BJ (cell line): ENCODE measurements at regions of chr4 and their contacts with region 1.

Region 1: GRCh38 chr4:72326692-72327632 is 242.1 kb downstream of the ADAMTS3 start:
- DNase-seq: no peak
- H3K4me3 ChIP-seq: no peak overlapping the region
- H3K27me3 ChIP-seq: no peaks in the 10 kb centered on the region; the same call in 1 of the 2 replicates
- CTCF ChIP-seq: peak; percentile 66

Region 2: GRCh38 chr4:72302981-72303704 is 23.8 kb before region 1 on chr4:
- CTCF ChIA-PET with region 1: interaction called, 12 read pairs
- POLR2A ChIA-PET with region 1: no interaction called
- DNase-seq: no peak
- H3K4me3 ChIP-seq: no peak overlapping the region
- H3K27me3 ChIP-seq: no peaks in the 10 kb centered on the region
- CTCF ChIP-seq: peak; percentile 67

Region 3: DNA sequence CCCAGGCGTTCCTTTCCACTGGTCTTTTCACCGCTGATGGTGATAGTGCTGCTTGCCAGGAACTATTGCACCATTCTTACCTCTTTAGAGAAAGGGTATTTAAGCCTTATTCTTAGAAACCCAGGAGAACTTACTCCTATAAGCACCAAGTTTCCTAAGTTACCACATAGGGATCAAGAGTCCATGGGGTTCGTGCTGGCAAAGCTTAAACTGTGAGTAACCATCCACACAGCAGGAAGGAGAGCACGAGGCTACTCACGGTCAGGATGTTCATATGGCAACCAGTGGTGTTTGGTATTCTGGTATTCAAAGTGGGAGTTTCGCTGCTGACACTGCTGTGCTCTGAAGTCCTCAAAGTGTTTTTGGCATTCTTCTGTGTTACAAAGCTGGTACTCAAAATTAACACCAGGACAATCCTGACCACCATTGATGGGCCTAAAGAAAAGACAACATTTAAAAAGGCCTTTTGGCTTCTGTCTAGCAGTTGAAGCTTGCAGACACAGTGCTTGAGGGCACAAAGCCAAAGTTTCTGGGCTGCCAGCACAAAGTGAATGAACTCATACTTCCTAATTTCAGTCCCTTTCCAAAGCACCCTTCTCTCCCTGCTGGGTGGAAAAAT is 14.8 kb before region 1 on chr4:
- CTCF ChIA-PET with region 1: interaction called, 24 read pairs
- POLR2A ChIA-PET with region 1: no interaction called
- DNase-seq: peak; percentile 81
- H3K4me3 ChIP-seq: no peak overlapping the region
- H3K27me3 ChIP-seq: no peaks in the 10 kb centered on the region
- CTCF ChIP-seq: no peak

Region 4: DNA sequence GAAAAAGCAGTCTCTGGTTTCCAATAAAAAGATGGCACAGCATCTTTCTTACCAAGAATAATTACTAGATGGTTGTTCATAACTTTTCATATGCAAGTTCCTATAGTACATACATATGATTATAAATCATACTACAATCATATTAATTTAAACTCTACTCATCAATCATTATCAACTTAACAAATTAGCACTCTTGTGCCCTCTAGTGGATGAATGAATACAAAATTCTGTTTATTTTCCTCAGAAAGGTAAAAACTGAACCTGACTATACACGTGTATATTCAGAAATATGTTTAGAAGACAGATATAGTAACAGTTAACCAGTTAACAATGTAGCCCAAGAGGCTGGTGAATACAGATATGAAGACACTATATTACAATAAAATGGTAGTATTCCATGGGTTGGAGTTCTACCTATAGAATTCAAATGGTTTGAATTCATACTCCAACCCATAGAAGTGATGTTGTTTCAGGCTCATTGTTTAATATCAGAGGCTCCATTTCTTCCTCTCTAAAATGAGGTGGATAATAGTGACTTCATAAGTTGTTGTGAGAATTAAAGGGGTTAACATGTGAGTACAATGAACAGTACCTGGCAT is 142.0 kb after region 1 on chr4:
- CTCF ChIA-PET with region 1: interaction called, 65 read pairs
- POLR2A ChIA-PET with region 1: no interaction called
- DNase-seq: no peak
- H3K4me3 ChIP-seq: no peak overlapping the region
- H3K27me3 ChIP-seq: no peaks in the 10 kb centered on the region
- CTCF ChIP-seq: peak; percentile 32

Region 5: GRCh38 chr4:72496112-72496511 is 169.2 kb after region 1 on chr4:
- CTCF ChIA-PET with region 1: interaction called, 12 read pairs
- POLR2A ChIA-PET with region 1: no interaction called
- DNase-seq: no peak
- H3K4me3 ChIP-seq: no peak overlapping the region
- H3K27me3 ChIP-seq: no peaks in the 10 kb centered on the region
- CTCF ChIP-seq: peak; percentile 23; the same call in 1 of the 2 replicates